ENCODE measurements at regions of chr6 and their contacts with region 1.

Region 1: GRCh38 chr6:154410619-154411072 is 54.0 kb upstream of the IPCEF1 start:
- DNase-seq: peak; percentile 54 to 84
- H3K4me3 ChIP-seq: no peak overlapping the region
- H3K27ac ChIP-seq: peak overlapping the region; percentile 67
- H3K4me1 ChIP-seq: peaks cover 17% of the 10 kb centered on the region
- H3K27me3 ChIP-seq: no peaks in the 10 kb centered on the region
- CTCF ChIP-seq: no peak

Region 2: DNA sequence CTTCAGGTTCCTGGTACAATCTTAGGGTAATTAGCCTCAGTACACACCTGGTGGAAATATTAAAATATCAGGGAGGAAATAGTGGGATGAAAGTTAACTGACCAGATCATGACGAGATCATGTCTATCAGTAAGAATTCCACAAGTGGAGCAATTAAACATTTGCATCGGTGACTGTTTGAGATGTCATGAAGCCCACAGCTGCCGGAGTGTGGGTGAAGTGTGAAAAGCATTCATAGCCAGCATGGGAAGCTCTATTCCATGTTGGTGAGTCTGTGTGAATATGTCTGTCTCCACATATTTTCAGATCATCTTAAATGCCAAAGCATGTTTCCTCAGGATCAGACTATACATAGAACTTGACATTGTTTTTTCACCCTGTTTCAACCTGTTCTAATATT is 196.9 kb before region 1 on chr6:
- CTCF ChIA-PET with region 1: no interaction called
- POLR2A ChIA-PET with region 1: no interaction called
- intact Hi-C with region 1: no loop called
- DNase-seq: no peak
- H3K4me3 ChIP-seq: no peak overlapping the region
- H3K27ac ChIP-seq: no peak overlapping the region
- H3K4me1 ChIP-seq: no peaks in the 10 kb centered on the region
- H3K27me3 ChIP-seq: no peaks in the 10 kb centered on the region
- CTCF ChIP-seq: no peak

Region 3: DNA sequence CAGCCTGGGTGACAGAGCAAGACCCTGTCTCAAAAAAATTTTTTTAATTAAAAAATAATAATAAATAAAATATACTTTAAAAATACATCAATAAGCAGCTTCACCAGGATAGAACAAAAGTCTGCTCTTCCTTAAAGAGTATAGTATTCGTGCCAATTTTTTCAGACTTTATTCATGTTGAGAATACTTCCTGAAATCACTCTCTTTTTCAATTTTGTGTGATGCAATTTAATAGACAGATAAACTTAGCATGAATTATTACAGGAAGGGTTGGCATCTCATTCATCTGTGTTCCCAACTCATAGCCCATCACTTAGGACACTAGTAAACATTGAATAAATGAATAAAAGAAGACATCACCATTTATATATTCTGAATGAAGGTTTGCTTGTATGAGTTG is 106.5 kb before region 1 on chr6:
- CTCF ChIA-PET with region 1: no interaction called
- POLR2A ChIA-PET with region 1: interaction called, 16 read pairs
- intact Hi-C with region 1: no loop called
- DNase-seq: no peak
- H3K4me3 ChIP-seq: no peak overlapping the region
- H3K27ac ChIP-seq: no peak overlapping the region
- H3K4me1 ChIP-seq: peaks cover 14% of the 10 kb centered on the region
- H3K27me3 ChIP-seq: no peaks in the 10 kb centered on the region
- CTCF ChIP-seq: no peak

Region 4: DNA sequence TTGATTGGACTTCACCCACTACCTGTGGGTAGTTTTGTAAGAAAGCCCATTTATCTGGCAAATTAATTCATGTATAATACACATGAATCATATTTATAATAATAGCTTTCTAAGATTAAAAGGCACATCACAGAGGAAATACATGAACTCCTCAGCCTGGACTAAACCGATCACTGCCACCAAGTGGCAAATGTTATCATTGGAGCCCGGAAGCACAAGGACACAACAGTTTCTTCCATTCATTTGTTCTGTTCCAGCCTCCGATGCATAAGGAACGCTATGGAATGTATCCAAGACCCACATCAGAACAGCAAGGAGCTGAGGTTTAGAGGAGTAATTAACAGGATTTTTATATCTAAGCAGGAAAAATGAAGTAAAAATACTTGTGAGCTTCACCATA is 40.1 kb before region 1 on chr6:
- CTCF ChIA-PET with region 1: interaction called, 14 read pairs
- POLR2A ChIA-PET with region 1: no interaction called
- intact Hi-C with region 1: no loop called
- DNase-seq: no peak
- H3K4me3 ChIP-seq: no peak overlapping the region
- H3K27ac ChIP-seq: no peak overlapping the region
- H3K4me1 ChIP-seq: peaks cover 12% of the 10 kb centered on the region
- H3K27me3 ChIP-seq: no peaks in the 10 kb centered on the region
- CTCF ChIP-seq: peak; percentile 44; the same call in 1 of the 2 replicates

Region 5: DNA sequence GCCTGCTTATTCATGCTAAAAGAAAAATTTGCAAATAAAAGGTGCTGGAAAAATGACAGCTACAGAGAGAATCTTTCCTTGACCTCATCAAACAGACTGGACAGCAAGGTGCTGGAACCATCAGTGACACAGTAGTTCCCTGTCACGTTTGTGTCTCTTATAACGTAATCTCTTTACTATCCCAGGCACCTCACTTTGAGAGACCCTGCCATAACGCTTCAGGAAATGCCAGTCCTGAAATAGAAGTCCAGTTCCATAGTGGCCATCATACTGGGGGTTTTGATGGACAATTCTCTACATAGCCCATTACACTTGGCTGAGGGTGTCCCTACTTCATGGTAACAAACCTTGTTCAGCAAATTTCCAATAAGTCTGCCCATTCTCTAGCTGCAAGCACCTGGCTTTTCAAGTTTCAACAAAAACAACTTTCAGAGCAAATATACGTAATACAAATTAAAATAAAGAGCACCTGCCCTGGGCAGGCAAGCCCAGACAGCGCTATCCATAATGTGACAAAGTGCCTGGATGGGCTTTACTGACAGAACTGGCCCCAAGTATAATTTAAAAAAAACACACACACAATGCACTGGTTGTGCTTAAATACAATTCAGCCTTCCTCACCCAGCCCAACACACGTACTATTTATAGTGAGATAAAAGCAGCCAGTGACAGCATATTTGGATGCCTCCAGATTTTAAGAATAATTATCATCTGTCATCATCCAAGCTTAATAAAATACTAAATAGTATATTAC is 61.1 kb after region 1 on chr6:
- CTCF ChIA-PET with region 1: no interaction called
- POLR2A ChIA-PET with region 1: no interaction called
- intact Hi-C with region 1: no loop called
- DNase-seq: no peak
- H3K4me3 ChIP-seq: no peak overlapping the region
- H3K27ac ChIP-seq: no peak overlapping the region
- H3K4me1 ChIP-seq: peaks cover 15% of the 10 kb centered on the region
- H3K27me3 ChIP-seq: no peaks in the 10 kb centered on the region
- CTCF ChIP-seq: no peak

Region 6: DNA sequence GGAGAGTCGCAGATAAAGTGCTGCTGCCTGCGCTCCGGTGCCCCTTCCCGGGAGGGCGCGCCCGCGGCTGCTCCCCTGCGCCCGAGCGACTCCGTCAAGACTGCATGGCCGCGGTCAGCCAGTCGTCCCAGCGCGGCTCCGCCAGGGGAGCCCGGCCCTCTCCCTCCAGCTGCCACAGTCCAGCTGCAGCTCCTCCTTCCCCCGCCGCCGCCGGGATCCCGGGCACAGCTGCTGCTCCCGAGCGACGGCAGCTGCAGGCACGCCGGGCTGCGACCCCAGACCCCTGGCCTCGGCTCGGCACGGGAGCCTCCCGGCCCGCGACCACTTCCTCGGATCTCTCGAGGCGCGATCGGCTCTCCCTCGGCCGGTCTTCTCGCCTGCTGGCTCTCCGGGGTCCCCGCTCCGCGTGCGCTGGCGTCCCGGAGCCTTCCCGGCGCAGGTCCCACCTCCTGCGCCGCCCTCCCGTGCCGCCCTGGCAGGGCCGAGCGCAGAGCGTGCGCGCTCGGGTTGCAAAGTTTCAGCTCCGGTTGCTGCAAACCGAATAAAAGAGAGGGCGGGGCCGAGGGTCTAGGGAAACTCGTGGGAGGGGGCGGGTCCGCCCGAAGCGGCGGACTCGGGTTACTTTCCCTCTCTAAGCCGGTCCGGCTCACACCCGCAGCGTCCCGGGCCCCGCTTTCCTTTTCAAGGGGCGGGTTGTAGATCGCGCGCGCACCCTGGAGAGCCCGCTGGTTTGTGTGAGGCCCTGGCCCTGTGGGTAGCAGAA is 99.7 kb after region 1 on chr6 and contains the start of gene CNKSR3:
- CTCF ChIA-PET with region 1: no interaction called
- POLR2A ChIA-PET with region 1: interaction called, 4 read pairs
- intact Hi-C with region 1: loop called (anchors 2 kb)
- DNase-seq: peak; percentile 71 to 80
- H3K4me3 ChIP-seq: peak within 1 kb of the TSS; percentile 94
- H3K27ac ChIP-seq: peak within 1 kb of the TSS; percentile 66
- H3K4me1 ChIP-seq: peaks cover 23% of the 10 kb centered on the region
- H3K27me3 ChIP-seq: no peaks in the 10 kb centered on the region
- CTCF ChIP-seq: no peak
- total RNA-seq, gene CNKSR3: 3.4 and 4.7 TPM in 2 replicates